ENCODE measurements at regions of chr15 and their contacts with region 1.

Region 1: DNA sequence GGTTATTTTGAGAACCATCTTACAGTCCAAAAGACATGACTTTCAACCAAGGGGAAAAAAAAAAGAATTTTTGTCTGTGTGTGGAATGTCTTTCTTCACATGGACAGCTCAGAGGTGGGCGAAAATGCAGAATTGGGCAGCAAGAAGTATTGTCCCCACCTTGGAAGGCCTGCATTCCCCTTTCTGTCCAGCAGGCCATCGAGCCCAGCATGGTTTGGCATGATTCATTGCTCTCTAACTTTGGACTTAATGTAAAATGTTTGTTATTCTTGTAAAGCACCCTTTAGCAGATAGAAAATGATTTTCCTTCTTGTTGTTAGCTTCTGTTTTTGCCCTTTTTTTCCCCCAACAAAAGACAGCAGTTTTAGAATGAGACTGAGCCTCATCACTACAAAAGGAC is 12.4 kb downstream of the MYO1E start:
- DNase-seq: no peak
- H3K4me3 ChIP-seq: no peak overlapping the region
- H3K27ac ChIP-seq: no peak overlapping the region
- H3K4me1 ChIP-seq: no peaks in the 10 kb centered on the region
- H3K27me3 ChIP-seq: no peaks in the 10 kb centered on the region
- CTCF ChIP-seq: no peak
- EP300 ChIP-seq: no peak
- POLR2A ChIP-seq: no peak

Region 2: DNA sequence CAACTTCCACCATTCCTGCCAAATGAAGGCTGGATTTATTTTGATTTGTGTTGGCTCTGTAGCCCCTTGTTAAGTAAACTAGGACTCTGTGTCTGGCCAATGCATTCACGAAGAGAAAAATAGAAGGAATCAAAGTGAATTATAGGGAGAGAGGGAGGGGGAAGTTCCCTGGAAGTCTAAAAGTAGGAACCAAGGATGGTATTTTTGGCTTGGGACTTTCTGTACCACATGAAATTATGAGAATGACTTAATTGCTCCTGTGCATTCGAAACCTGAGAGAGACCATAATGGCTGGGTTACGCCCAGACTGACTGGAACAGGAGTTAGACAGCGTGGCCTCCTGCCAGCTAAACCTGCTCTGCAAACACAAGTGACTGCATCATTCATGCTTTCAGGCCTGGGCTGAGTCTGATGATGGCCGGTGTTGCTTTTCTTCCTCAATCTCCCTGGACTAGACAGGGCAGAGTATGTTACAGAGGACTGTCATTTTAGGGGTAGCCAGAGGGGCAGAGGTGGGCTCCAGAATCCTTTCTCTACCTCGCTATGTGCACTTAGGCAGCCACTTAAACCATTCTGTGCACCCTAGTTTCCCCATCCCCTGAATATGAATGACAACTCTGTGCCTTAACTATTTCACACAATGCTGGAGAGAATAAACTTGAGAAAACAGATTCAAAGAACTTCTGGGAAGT is 46.5 kb before region 1 on chr15:
- intact Hi-C with region 1: loop called in 1 of 4 experiments (anchors 10 kb)
- DNase-seq: peak; percentile 19 to 56 (median 36)
- H3K4me3 ChIP-seq: no peak overlapping the region
- H3K27ac ChIP-seq: no peak overlapping the region
- H3K4me1 ChIP-seq: peaks cover 8% of the 10 kb centered on the region
- H3K27me3 ChIP-seq: no peaks in the 10 kb centered on the region
- CTCF ChIP-seq: no peak
- EP300 ChIP-seq: no peak
- POLR2A ChIP-seq: no peak

Region 3: GRCh38 chr15:59399465-59400102 is 39.3 kb after region 1 on chr15:
- intact Hi-C with region 1: no loop called
- DNase-seq: no peak
- H3K4me3 ChIP-seq: no peak overlapping the region
- H3K27ac ChIP-seq: no peak overlapping the region
- H3K4me1 ChIP-seq: no peaks in the 10 kb centered on the region
- H3K27me3 ChIP-seq: no peaks in the 10 kb centered on the region
- CTCF ChIP-seq: no peak
- EP300 ChIP-seq: no peak
- POLR2A ChIP-seq: no peak

Measured in ovary (tissue), 10 donors.